ENCODE measurements at regions of chr15 and their contacts with region 1.

Region 1: GRCh38 chr15:95520511-95520910 is 810.0 kb upstream of the NR2F2 start:
- DNase-seq: no peak
- ATAC-seq: no peak

Region 2: GRCh38 chr15:95464509-95464908 is 56.0 kb before region 1 on chr15:
- intact Hi-C with region 1: no loop called
- DNase-seq: no peak
- ATAC-seq: no peak

Region 3: GRCh38 chr15:95580130-95580529 is 59.6 kb after region 1 on chr15:
- intact Hi-C with region 1: loop called (anchors 10 kb)
- DNase-seq: no peak
- ATAC-seq: no peak